ENCODE measurements at regions of chr5 and their contacts with region 1.

Region 1: GRCh38 chr5:173144200-173145176 is at the start of gene BNIP1:
- DNase-seq: peak; percentile 93
- H3K4me3 ChIP-seq: peak within 1 kb of the TSS; percentile 92 to 97
- H3K27ac ChIP-seq: peak within 1 kb of the TSS; percentile 83 to 86
- H3K4me1 ChIP-seq: peaks cover 0 to 4% of the 10 kb centered on the region in 2 experiments; a peak in 1 of 4 replicates
- H3K27me3 ChIP-seq: no peaks in the 10 kb centered on the region
- CTCF ChIP-seq: peak; percentile 82
- EP300 ChIP-seq: peak in 1 of 2 experiments; percentile 54; a peak in 1 of 4 replicates
- RAD21 ChIP-seq: peak; percentile 39
- polyA plus RNA-seq, gene BNIP1: 16.7 and 21.1 TPM in 2 replicates

Region 2: GRCh38 chr5:173155912-173156311 is 11.4 kb after region 1 on chr5:
- CTCF ChIA-PET with region 1: interaction called, 10 read pairs
- POLR2A ChIA-PET with region 1: no interaction called
- DNase-seq: no peak
- H3K4me3 ChIP-seq: no peak overlapping the region
- H3K27ac ChIP-seq: no peak overlapping the region
- H3K4me1 ChIP-seq: no peaks in the 10 kb centered on the region
- H3K27me3 ChIP-seq: no peaks in the 10 kb centered on the region
- CTCF ChIP-seq: no peak
- EP300 ChIP-seq: no peak
- RAD21 ChIP-seq: no peak

Measured in SK-N-SH (cell line).